ENCODE measurements at regions of chr17 and their contacts with region 1.

Region 1: DNA sequence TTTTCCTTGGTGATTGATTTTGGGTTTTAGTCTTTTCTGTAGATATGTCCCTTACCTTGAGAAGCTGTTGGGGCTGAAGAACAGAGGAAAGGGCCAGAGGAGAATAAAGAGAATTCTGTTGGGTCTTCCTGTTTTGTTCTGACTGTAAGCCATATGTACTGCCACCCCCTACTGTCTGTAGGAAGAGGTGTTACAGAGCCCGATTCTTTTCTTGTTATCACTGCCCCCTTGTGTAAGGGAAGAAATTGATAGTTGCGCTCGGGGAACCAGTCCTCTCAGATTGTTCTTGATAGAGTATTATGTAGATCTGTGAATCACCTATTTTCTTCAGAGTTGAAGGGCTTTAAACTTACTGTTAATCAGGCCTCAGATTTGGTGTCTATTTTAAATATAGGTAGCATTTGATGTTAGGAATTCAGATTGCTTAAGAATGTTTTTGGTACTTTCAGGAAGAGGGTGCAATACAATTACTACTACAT is 2.4 kb downstream of the TANC2 start:
- DNase-seq: peak; percentile 71
- H3K4me3 ChIP-seq: peak overlapping the region; percentile 83
- CTCF ChIP-seq: peak; percentile 86

Region 2: GRCh38 chr17:62703775-62704378 is 264.6 kb before region 1 on chr17:
- CTCF ChIA-PET with region 1: interaction called, 19 read pairs
- POLR2A ChIA-PET with region 1: interaction called, 4 read pairs
- DNase-seq: no peak
- H3K4me3 ChIP-seq: peak overlapping the region; percentile 62
- CTCF ChIP-seq: peak; percentile 97

Region 3: DNA sequence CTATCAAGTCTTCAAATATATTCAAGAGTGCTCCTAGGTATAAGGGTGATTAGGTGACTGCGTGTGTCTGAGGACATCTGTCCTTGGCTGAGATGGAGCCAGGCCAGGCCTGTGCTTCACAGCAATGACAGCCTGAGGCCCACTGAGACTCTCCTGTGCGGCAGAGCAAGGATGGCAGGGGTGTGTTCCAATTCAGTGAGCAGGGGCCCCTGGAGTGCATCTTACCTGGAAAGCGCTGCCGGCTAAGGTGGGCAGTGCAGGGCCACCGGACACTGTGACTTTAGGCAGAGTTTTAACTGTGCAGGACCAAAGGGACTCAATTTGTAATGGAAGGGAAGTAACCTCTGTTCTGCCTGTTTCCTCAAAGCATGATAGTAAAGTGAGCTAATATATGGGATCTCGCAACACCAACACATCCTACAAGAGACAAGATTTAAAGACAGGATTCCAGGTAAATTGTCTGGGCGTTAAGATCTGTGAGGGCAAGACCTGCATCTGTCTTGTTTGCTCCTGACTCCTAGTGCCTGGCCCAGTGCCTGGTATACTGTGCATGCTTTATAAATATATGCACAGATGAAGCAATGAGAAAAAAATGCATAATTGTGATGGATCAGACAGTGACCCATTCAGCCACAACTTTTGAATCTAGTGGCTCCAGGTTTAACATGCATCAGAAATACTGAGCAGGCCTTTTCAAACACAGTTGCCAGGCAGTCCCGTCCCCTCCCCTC is 254.3 kb before region 1 on chr17:
- CTCF ChIA-PET with region 1: interaction called, 17 read pairs
- POLR2A ChIA-PET with region 1: no interaction called
- DNase-seq: no peak
- H3K4me3 ChIP-seq: no peak overlapping the region
- CTCF ChIP-seq: no peak

Measured in AG04449 (cell line).